ENCODE measurements at regions of chr2 and their contacts with region 1.

Region 1: DNA sequence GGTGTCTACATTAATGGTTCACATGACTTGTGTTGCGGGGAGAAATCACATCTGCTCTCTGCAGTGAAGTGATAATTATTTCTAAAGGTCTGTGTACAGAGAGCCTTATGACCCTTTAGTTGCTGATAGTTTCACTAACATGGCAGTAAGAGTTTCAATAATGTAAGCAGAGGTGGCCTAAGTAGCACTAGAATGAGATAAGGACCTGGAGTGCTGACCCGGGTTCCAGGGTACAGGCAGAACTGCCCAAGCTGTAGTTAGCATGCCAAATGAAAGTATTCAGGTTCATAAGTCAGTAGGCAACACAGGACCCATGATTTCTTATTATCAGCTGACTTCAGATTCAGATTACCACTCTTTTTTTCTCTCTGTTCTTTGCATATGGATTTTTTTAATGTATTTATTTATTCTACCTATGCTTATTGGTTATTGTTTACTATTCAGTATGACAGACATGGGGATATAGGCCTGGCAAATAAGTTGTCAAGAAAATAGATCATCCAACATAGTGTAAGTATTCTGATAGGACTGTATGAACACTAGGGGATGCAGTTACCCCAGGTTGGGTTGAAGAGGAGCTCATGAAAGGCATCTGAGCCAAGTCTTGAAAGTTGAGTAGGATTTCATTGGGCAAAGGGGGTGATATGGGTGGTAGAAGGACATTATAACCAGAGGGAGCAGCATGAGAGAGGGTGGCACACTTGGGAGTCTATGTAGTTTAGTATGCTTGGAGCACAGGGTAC is 105.2 kb downstream of the CCDC85A start:
- DNase-seq: no peak
- H3K4me3 ChIP-seq: no peak overlapping the region
- CTCF ChIP-seq: no peak
- POLR2A ChIP-seq: no peak

Region 2: DNA sequence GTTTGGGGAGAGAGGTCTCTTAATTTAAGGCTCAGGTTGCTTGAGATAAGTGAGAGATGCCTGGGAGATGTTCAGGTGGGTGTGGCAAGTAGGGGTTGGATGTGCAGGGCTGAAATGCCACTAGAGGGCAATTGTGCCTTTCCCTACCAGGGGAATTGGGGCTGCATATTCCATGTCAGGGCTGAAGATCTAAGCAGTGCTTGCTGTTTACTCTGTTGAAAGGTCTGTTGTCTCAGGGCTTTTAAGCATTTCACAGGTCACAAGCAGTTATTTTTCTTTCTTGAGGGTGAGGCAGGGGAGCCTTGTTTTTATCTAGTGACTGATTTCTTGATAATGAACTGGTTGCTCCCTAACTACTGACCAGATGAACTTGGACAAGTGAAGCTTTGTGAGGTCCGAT is 97.3 kb before region 1 on chr2:
- intact Hi-C with region 1: no loop called
- DNase-seq: no peak
- H3K4me3 ChIP-seq: no peak overlapping the region
- CTCF ChIP-seq: no peak
- POLR2A ChIP-seq: no peak

Region 3: GRCh38 chr2:56309626-56310170 is 20.7 kb after region 1 on chr2:
- intact Hi-C with region 1: loop called (anchors 2 kb)
- DNase-seq: no peak
- H3K4me3 ChIP-seq: no peak overlapping the region
- CTCF ChIP-seq: no peak
- POLR2A ChIP-seq: no peak

Region 4: DNA sequence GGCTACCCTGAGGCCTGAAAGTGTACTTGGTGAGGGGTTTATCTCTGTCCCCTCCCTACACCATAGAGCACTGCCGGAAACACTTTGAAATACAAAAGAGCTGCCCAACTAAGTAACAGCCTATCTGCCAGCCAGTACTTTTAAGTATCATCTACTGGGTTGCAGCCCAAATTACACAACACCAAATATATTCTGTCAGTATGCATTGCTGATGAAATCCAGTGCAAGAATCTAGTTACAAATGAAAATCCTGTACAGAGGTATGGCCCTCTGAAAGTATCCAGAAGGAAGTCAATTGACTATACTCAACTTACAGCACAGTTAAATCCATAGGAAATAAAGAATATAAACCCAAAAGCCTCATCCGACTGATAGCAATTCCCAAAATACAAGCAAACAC is 175.6 kb after region 1 on chr2:
- intact Hi-C with region 1: loop called (anchors 2 kb)
- DNase-seq: no peak
- H3K4me3 ChIP-seq: no peak overlapping the region
- CTCF ChIP-seq: no peak
- POLR2A ChIP-seq: no peak